Naive thymus-derived CD8-positive, alpha-beta T cell (primary cell): ENCODE measurements at regions of chr14 and their contacts with region 1.

Region 1: GRCh38 chr14:44961604-44962333 is at the starts of genes KLHL28 and TOGARAM1:
- DNase-seq: peak; percentile 82 to 100 (median 98)
- ATAC-seq: peak; percentile 85 to 89
- H3K4me3 Mint-ChIP-seq: no peak within 1 kb of the TSS
- H3K27ac Mint-ChIP-seq: no peak within 1 kb of the TSS
- H3K4me1 Mint-ChIP-seq: peaks cover 12 to 67% (median 45%) of the 10 kb centered on the region in 4 donors
- H3K27me3 Mint-ChIP-seq: no peaks in the 10 kb centered on the region
- polyA plus RNA-seq, gene KLHL28: 41.2 to 53.9 (median 41.9) TPM
- polyA plus RNA-seq, gene TOGARAM1: 7.6 to 13.3 (median 10.0) TPM

Region 2: GRCh38 chr14:44897045-44897844 is 64.5 kb before region 1 on chr14:
- POLR2A ChIA-PET with region 1: interaction called, 60 read pairs
- DNase-seq: peak; percentile 88 to 99 (median 94)
- ATAC-seq: peak; percentile 93 to 96
- H3K4me3 Mint-ChIP-seq: peak overlapping the region; percentile 85 to 97 (median 93)
- H3K27ac Mint-ChIP-seq: peak overlapping the region; percentile 89 to 98 (median 96)
- H3K4me1 Mint-ChIP-seq: peaks cover 4 to 33% (median 23%) of the 10 kb centered on the region in 4 donors
- H3K27me3 Mint-ChIP-seq: no peaks in the 10 kb centered on the region

Region 3: DNA sequence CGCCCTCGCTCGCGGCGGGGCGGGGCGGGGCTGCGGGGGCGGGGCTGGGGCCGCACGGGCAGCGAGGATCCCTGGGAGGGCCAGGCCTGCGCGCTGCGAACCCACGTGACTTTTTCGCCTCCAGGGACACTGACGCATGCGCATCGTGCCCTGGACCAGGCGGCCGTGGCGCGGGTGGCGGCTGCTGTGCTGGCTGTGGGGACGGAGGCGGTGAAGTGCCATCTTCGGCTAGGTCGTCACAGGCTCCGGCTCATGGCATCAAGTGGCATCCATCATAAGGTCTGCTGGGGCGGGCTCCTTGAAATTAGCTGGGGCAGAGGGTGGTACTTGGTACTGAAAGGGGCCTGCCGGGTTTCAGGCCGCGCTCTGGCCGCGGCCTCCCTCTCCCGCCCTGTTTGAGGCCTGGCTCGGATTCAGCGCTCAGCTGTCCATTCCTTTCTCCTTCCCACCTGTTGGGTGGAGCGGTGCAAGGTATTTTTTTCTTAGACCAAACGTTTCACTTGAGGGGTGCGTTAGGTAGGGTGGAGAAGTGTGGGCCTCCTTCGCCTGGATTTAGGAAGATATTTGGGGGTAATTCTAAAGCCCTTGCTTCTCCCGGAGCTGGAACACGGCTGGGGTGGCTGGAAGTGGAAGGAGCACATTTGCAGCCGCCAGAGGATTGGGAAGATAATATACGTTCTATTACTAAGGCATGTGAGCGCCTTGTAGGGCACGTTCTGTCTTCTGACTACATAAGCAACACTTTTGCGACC is 122.4 kb after region 1 on chr14 and contains the start of gene PRPF39:
- POLR2A ChIA-PET with region 1: interaction called, 17 read pairs
- DNase-seq: peak; percentile 90 to 97 (median 94)
- ATAC-seq: peak; percentile 90 to 97
- H3K4me3 Mint-ChIP-seq: peak within 1 kb of the TSS; percentile 91 to 98 (median 96)
- H3K27ac Mint-ChIP-seq: peak within 1 kb of the TSS; percentile 88 to 97 (median 96)
- H3K4me1 Mint-ChIP-seq: peaks cover 26 to 58% (median 51%) of the 10 kb centered on the region in 4 donors
- H3K27me3 Mint-ChIP-seq: no peaks in the 10 kb centered on the region
- polyA plus RNA-seq, gene PRPF39: 9.8 to 11.6 (median 11.4) TPM

Region 4: DNA sequence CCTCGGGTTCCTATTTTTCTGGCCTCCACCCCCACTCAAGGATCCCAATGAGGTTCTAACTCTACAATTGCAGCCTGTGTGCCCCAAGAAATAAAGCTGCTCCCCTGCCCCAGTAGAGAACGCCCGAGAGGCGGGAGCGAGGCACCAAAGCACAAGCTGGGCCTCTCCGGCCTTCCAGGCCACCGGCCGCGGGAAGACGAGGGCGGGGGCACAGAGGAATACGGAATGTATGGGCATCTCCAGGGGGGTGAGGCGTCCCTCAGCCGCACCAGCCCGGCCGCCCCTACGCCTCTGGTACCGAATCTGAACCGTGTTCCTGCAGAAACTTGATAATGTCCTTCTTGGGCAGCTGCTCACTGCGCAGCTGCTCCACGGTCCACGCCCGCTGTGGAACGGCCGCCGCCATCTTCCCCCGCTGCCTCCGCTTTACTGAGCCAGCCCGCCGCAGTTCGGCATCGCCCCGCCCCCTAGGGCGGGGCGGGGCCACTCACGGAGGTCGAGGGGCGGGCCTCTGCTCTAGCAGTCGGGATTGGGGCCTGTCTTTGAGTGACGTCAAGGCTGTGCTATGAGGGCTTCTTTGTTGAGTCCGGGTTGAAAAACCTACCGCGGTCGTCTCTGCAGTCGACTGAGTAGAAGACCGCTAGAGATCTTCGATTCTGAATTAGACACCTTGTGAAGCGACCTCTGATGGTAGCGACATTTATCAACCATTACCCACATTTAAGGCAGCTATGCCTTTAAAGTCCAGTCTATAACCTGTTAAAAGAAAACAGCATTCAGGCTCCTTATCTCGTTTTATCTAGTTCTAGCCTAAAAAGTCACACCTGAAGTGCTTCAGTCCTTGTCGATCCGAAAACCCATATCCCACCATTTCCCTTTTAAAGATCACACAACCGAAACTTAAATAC is 172.5 kb after region 1 on chr14 and contains the start of gene FKBP3:
- POLR2A ChIA-PET with region 1: interaction called, 46 read pairs
- DNase-seq: peak; percentile 83 to 99 (median 95)
- ATAC-seq: peak; percentile 90 to 93
- H3K4me3 Mint-ChIP-seq: peak within 1 kb of the TSS; percentile 94 to 100 (median 96)
- H3K27ac Mint-ChIP-seq: peak within 1 kb of the TSS; percentile 94 to 99 (median 98)
- H3K4me1 Mint-ChIP-seq: peaks cover 23 to 63% (median 45%) of the 10 kb centered on the region in 4 donors
- H3K27me3 Mint-ChIP-seq: no peaks in the 10 kb centered on the region
- polyA plus RNA-seq, gene FKBP3: 60.9 to 83.2 (median 81.6) TPM

Region 5: DNA sequence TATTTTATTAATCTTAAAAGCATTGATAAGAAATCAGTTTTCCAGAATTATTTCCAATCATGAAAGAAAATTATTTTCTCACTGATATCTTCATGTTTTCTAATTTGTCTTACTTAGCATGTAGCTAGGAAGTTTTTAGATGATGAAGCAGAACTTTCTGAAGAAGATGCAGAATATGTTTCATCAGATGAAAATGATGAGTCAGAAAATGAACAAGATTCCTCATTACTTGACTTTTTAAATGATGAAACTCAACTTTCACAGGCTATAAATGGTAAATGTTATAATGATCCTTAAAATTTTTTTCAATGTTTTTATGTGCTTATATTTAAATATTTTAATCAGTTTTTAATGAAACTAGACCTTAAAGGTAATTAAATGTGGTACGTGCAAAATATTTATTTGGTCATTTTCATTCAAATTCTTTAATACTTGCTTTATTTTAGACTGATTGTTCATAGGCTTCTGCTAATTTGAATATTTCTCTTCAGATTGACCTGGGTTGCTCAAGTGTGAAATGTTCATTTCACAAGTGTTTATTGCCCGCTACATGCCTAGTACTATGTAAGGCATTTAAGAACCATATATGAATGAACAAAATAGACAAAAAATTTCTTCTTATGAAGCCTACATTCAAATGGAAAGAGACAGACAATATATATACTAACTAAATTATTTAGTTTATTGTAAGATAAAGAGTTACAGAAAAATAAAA is 223.5 kb after region 1 on chr14:
- POLR2A ChIA-PET with region 1: no interaction called
- DNase-seq: no peak
- ATAC-seq: no peak
- H3K4me3 Mint-ChIP-seq: no peak overlapping the region
- H3K27ac Mint-ChIP-seq: no peak overlapping the region
- H3K4me1 Mint-ChIP-seq: no peaks in the 10 kb centered on the region
- H3K27me3 Mint-ChIP-seq: no peaks in the 10 kb centered on the region

Region 6: DNA sequence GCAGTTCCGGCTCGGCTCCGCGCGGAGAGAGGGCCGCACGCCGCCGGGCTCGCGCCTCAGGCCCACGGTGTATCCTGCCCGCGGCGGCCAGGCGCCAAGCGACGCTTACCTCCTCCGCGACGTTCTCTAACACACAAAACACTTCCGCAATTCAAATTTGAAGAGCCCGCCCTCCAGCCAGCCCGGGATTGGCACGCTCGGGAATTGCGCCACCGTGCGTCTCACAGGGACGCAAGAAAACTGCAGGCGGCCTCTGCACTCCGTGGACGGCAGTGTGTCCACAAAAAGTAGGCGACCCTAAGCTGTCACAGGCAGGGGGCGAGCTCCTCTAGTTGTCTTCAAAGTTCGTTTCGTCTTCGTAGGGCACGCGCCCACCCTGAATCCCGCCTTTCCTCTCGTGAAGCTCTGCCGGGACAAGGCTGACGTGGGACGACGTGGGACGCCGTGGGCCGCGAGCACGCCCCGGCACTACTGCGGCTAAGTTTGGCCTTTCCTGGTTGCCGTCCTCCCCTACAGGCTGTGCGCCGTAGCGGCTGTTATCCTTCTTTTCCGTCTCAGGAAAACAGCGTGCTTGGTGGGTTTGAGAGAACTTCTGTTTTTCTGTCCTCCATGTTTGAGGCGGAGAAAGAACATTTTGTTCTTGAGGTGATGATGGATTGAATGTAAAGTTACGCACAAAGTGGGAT is 291.4 kb after region 1 on chr14 and contains the start of gene MIS18BP1:
- POLR2A ChIA-PET with region 1: interaction called, 15 read pairs
- DNase-seq: peak; percentile 82 to 96 (median 92)
- ATAC-seq: peak; percentile 88 to 92
- H3K4me3 Mint-ChIP-seq: peak within 1 kb of the TSS; percentile 90 to 97 (median 96)
- H3K27ac Mint-ChIP-seq: peak within 1 kb of the TSS; percentile 89 to 98 (median 98)
- H3K4me1 Mint-ChIP-seq: peaks cover 8 to 37% (median 20%) of the 10 kb centered on the region in 4 donors
- H3K27me3 Mint-ChIP-seq: no peaks in the 10 kb centered on the region
- polyA plus RNA-seq, gene MIS18BP1: 16.2 to 18.4 (median 18.0) TPM